ENCODE measurements at regions of chr11 and their contacts with region 1.

Region 1: GRCh38 chr11:116445108-116446047 is 327.4 kb downstream of the BUD13 start:
- DNase-seq: no peak
- H3K4me3 ChIP-seq: no peak overlapping the region
- H3K27ac ChIP-seq: no peak overlapping the region
- H3K4me1 ChIP-seq: no peaks in the 10 kb centered on the region
- H3K27me3 ChIP-seq: no peaks in the 10 kb centered on the region
- CTCF ChIP-seq: no peak
- EP300 ChIP-seq: no peak
- POLR2A ChIP-seq: no peak

Region 2: DNA sequence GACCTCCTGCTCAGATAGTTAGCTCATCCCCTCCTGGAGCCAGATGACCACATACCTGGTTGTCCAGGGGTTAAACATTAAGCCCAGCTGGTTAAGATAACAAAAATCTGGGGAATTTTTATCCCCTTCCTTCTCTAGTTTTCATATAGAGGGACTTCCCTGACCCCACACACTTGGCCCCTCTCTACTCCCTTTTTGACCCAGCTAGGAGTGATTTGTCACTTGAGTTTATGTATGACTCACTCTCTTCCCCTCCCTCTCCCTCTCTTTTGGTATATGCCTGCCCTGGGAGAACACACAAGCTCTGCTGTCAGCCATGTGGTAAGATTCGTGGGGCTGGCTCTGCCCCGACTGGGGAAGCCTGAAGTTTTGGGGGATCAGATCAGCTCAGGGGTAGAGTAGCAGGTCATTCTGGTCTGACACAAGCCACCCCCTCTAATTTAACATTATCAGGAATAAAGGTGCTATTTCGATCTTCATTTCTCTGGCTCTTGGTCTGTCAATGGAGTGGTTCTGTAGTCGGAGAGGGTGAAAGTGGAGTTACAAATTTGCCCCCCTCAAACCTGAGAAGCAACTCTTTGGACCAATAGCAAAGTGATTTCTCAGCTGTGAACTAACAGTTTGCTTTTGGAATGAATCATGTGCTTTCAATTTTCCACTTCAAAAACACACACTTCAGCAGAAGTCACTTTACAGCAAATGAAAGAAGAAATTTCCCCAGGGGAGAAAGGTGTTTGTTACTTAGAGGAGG is 525.9 kb before region 1 on chr11:
- intact Hi-C with region 1: no loop called
- DNase-seq: no peak
- H3K4me3 ChIP-seq: no peak overlapping the region
- H3K27ac ChIP-seq: no peak overlapping the region
- H3K4me1 ChIP-seq: peaks cover 0 to 20% (median 10%) of the 10 kb centered on the region in 4 donors
- H3K27me3 ChIP-seq: no peaks in the 10 kb centered on the region
- CTCF ChIP-seq: no peak
- EP300 ChIP-seq: no peak
- POLR2A ChIP-seq: no peak

Region 3: GRCh38 chr11:116412118-116412889 is 33.1 kb before region 1 on chr11:
- intact Hi-C with region 1: loop called (anchors 5 kb)
- DNase-seq: no peak
- H3K4me3 ChIP-seq: no peak overlapping the region
- H3K27ac ChIP-seq: no peak overlapping the region
- H3K4me1 ChIP-seq: peaks cover 0 to 29% (median 19%) of the 10 kb centered on the region in 4 donors
- H3K27me3 ChIP-seq: no peaks in the 10 kb centered on the region
- CTCF ChIP-seq: no peak
- EP300 ChIP-seq: no peak
- POLR2A ChIP-seq: no peak

Measured in sigmoid colon (tissue), 7 donors.